ENCODE measurements at regions of chr14 and their contacts with region 1.

Region 1: GRCh38 chr14:102437997-102438915 is 71.3 kb downstream of the ANKRD9 start:
- DNase-seq: peak; percentile 37
- ATAC-seq: peak; percentile 99
- H3K4me3 ChIP-seq: no peak overlapping the region
- H3K27ac ChIP-seq: no peak overlapping the region
- H3K4me1 ChIP-seq: no peaks in the 10 kb centered on the region; the same call in 1 of the 2 replicates
- H3K27me3 ChIP-seq: peaks cover 0 to 1% of the 10 kb centered on the region in 2 experiments; a peak in 1 of 4 replicates
- CTCF ChIP-seq: peak; percentile 65 to 88 (median 80)
- EP300 ChIP-seq: no peak
- POLR2A ChIP-seq: no peak
- RAD21 ChIP-seq: peak; percentile 75

Region 2: GRCh38 chr14:102421411-102422053 is 16.7 kb before region 1 on chr14:
- CTCF ChIA-PET with region 1: interaction called, 11 read pairs
- POLR2A ChIA-PET with region 1: no interaction called
- RAD21 ChIA-PET with region 1: no interaction called
- SMC1A ChIA-PET with region 1: interaction called, 3 read pairs
- in situ Hi-C with region 1: no loop called
- intact Hi-C with region 1: no loop called
- DNase-seq: no peak
- ATAC-seq: no peak
- H3K4me3 ChIP-seq: no peak overlapping the region
- H3K27ac ChIP-seq: no peak overlapping the region
- H3K4me1 ChIP-seq: no peaks in the 10 kb centered on the region
- H3K27me3 ChIP-seq: no peaks in the 10 kb centered on the region
- CTCF ChIP-seq: no peak
- EP300 ChIP-seq: no peak
- POLR2A ChIP-seq: no peak
- RAD21 ChIP-seq: no peak

Region 3: DNA sequence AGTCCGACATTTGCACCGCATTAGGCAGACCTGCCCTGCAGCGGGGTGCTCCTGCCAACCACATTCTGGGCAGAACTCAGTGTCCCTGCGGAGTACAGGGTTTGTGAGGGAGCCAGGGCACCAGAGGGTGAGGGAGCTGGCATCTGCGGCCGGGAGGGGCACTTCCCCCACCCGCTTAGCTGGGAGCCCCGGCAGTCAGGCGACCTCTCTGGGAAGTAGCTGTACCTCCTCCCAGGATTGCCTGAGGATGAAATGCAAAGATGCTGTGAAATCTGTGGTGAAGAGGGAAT is 12.8 kb after region 1 on chr14:
- CTCF ChIA-PET with region 1: interaction called, 11 read pairs
- POLR2A ChIA-PET with region 1: no interaction called
- RAD21 ChIA-PET with region 1: interaction called, 3 read pairs
- SMC1A ChIA-PET with region 1: interaction called, 5 read pairs
- in situ Hi-C with region 1: no loop called
- intact Hi-C with region 1: no loop called
- DNase-seq: no peak
- ATAC-seq: no peak
- H3K4me3 ChIP-seq: no peak overlapping the region
- H3K27ac ChIP-seq: no peak overlapping the region
- H3K4me1 ChIP-seq: no peaks in the 10 kb centered on the region
- H3K27me3 ChIP-seq: no peaks in the 10 kb centered on the region
- CTCF ChIP-seq: no peak
- EP300 ChIP-seq: no peak
- POLR2A ChIP-seq: no peak
- RAD21 ChIP-seq: no peak

Region 4: DNA sequence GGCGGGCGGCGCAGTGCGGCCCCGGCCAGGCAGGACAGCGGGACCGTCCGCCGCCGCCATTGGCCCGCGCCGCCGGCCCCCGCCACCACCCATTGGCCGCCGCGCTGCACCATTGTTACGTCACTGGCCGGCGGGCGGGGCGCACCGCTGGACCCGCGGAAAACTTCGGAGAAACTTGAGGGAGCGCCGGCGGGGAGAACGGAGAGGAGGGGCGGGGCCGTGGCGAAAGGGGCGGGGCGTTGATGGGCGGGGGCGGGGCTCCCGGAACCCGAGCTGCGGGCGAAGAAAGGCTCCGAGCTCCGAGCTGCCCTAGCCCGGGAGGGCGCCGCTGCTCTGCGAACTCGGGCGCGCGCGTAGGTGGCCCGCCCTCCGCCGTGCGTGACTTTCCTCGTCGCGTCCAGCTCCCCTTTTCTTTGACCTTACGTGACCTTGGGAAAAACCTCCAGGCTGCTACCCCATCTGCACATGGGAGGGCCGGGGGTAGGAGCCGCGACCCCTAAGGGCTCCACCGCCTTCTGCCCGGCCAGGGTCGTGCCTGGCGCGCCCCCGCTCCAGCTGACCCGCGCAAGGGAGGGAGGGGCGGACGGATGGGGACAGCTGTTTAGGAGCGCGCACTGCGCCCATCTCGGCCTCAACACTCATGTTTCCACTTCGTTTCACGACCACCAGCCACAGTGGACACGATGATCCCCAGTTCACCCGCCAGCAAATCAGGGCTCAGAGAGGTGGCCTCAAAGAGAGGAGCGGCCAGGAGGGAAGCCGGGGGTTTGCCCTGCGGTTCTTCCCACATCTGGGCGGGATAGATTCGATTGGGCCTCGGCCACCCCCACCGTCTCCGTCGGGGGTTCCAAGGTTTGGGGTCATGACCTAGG is 71.7 kb after region 1 on chr14 and contains the start of gene ANKRD9:
- CTCF ChIA-PET with region 1: interaction called, 59 read pairs
- POLR2A ChIA-PET with region 1: no interaction called
- RAD21 ChIA-PET with region 1: interaction called, 20 read pairs
- SMC1A ChIA-PET with region 1: interaction called, 20 read pairs
- in situ Hi-C with region 1: loop called (anchors 5 kb)
- intact Hi-C with region 1: no loop called
- DNase-seq: peak; percentile 30
- ATAC-seq: peak; percentile 89
- H3K4me3 ChIP-seq: peak within 1 kb of the TSS; percentile 90
- H3K27ac ChIP-seq: no peak within 1 kb of the TSS
- H3K4me1 ChIP-seq: peaks cover 9% of the 10 kb centered on the region
- H3K27me3 ChIP-seq: no peaks in the 10 kb centered on the region
- CTCF ChIP-seq: no peak
- EP300 ChIP-seq: no peak
- POLR2A ChIP-seq: peak; percentile 54; the same call in 1 of the 2 replicates
- RAD21 ChIP-seq: no peak
- polyA plus RNA-seq, gene ANKRD9: 0.03 to 0.04 TPM

Region 5: DNA sequence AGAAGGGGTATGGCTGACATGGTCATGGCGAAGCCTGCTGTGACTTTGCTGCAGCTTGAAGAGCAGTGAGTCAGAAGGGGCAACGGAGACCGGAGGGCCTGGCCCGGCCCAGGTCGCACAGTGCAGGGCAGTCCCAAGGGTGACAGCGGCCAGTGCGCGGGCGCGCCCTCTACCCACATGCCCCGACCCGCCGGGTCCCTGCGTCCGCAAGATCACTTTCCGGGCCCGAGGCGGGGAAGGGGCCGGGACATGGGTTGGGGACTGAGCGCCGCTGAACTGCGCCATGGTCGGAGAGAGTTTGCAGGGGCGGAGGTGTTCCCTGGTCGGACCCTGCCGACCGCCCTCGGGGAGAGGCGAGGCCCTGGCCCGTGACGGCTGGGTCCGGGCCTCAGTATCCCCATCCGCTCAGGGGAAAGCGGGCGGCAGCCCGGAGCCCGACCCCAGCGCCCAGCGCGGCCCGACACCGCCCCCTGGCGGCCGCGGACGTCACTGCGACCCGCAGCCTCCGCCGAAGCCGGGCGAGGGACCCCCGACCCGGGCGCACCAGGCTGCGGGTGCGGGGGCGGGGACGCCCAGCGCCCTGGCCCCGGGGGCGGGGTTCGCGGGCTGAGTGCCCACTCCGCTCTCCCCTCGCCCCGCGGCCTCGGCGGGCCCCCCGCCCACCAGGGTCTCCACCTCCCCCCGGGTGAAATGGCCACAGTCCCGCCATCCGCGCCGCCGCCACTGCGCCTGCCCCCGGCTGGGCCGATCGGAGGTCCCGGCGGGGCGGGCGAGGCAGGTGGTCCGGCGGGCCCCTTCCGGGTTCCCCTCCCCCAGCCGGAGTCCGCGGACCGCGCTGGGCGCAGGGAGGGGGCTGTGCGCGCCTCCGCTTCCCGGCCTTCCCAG is 78.5 kb after region 1 on chr14:
- CTCF ChIA-PET with region 1: interaction called, 59 read pairs
- POLR2A ChIA-PET with region 1: interaction called, 3 read pairs
- RAD21 ChIA-PET with region 1: interaction called, 20 read pairs
- SMC1A ChIA-PET with region 1: interaction called, 20 read pairs
- in situ Hi-C with region 1: loop called (anchors 5 kb)
- intact Hi-C with region 1: loop called (anchors 1 kb)
- DNase-seq: no peak
- ATAC-seq: peak; percentile 89
- H3K4me3 ChIP-seq: peak overlapping the region; percentile 46
- H3K27ac ChIP-seq: no peak overlapping the region
- H3K4me1 ChIP-seq: no peaks in the 10 kb centered on the region
- H3K27me3 ChIP-seq: peaks cover 0 to 2% of the 10 kb centered on the region in 2 experiments; a peak in 1 of 4 replicates
- CTCF ChIP-seq: peak; percentile 66 to 81 (median 71); a peak in 5 of 6 replicates
- EP300 ChIP-seq: no peak
- POLR2A ChIP-seq: no peak
- RAD21 ChIP-seq: peak; percentile 69

Region 6: GRCh38 chr14:102524466-102525218 is 86.4 kb after region 1 on chr14:
- CTCF ChIA-PET with region 1: interaction called, 23 read pairs
- POLR2A ChIA-PET with region 1: no interaction called
- RAD21 ChIA-PET with region 1: interaction called, 10 read pairs
- SMC1A ChIA-PET with region 1: interaction called, 9 read pairs
- in situ Hi-C with region 1: loop called (anchors 5 kb)
- intact Hi-C with region 1: no loop called
- DNase-seq: peak; percentile 96
- ATAC-seq: peak; percentile 99
- H3K4me3 ChIP-seq: peak overlapping the region; percentile 84
- H3K27ac ChIP-seq: peak overlapping the region; percentile 43
- H3K4me1 ChIP-seq: no peaks in the 10 kb centered on the region; the same call in 1 of the 2 replicates
- H3K27me3 ChIP-seq: no peaks in the 10 kb centered on the region
- CTCF ChIP-seq: peak; percentile 96 to 97 (median 97)
- EP300 ChIP-seq: no peak
- POLR2A ChIP-seq: peak; percentile 83
- RAD21 ChIP-seq: peak; percentile 81

Region 7: DNA sequence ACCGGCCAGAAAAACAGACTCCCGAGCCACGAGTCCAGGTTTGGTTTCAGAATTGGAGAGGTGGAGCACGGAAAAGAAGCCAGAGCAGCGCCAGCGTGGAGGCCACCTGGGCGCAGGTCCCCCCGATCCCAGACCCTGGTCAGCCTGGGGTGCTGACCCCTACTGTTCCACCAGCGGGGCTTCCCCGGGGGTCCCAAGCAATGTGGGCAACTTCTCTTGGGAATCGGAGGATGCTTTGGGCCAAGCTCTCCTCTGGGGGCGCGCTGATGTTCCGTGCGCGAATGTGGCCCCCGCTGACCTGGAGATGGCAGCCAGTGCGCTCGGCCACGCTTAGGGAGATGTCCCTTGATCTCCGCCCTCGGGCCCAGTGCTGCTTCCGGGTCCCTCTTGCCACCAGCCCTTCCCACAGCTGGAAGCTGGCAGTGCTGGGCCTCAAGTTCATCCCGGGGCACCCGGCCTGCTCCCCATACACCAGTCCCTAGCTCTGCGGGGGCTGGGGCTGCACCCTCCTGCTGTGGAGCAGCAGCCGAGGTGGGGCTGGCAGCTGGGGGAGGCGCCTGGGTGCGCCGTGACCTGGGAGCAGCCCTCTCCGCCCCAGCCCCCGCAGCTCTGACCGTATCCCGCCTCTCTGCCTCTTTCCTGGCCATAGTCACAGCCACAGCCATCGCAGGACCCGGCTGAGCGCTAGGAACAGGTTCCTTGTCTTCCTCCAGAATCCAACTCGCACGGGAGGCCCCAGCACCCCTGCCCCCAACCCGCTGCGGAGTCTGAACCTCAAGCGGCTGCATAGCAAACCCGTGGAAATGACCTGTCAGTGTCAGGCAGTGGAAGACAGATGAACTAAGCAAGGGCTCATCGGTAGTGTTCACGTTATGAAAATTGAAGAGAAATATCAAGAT is 245.4 kb after region 1 on chr14:
- CTCF ChIA-PET with region 1: interaction called, 3 read pairs
- POLR2A ChIA-PET with region 1: no interaction called
- RAD21 ChIA-PET with region 1: no interaction called
- SMC1A ChIA-PET with region 1: no interaction called
- in situ Hi-C with region 1: no loop called
- intact Hi-C with region 1: loop called (anchors 10 kb)
- DNase-seq: no peak
- ATAC-seq: no peak
- H3K4me3 ChIP-seq: no peak overlapping the region
- H3K27ac ChIP-seq: no peak overlapping the region
- H3K4me1 ChIP-seq: no peaks in the 10 kb centered on the region
- H3K27me3 ChIP-seq: no peaks in the 10 kb centered on the region
- CTCF ChIP-seq: no peak
- EP300 ChIP-seq: no peak
- POLR2A ChIP-seq: no peak
- RAD21 ChIP-seq: no peak